CD4-positive, alpha-beta memory T cell (primary cell): ENCODE measurements at regions of chr19 and their contacts with region 1.

Region 1: GRCh38 chr19:38335949-38336637 is 463 bp downstream of the CATSPERG start:
- DNase-seq: peak; percentile 93 to 97 (median 94)
- H3K4me3 ChIP-seq: peak overlapping the region; percentile 79 to 88
- H3K4me3 Mint-ChIP-seq: peak overlapping the region; percentile 93 to 99 (median 96)
- H3K27ac ChIP-seq: peak overlapping the region; percentile 83
- H3K27ac Mint-ChIP-seq: peak overlapping the region; percentile 94 to 100 (median 99)
- H3K4me1 ChIP-seq: peaks cover 7% of the 10 kb centered on the region
- H3K4me1 Mint-ChIP-seq: peaks cover 11 to 20% (median 16%) of the 10 kb centered on the region in 4 donors
- H3K27me3 ChIP-seq: no peaks in the 10 kb centered on the region
- H3K27me3 Mint-ChIP-seq: no peaks in the 10 kb centered on the region

Region 2: DNA sequence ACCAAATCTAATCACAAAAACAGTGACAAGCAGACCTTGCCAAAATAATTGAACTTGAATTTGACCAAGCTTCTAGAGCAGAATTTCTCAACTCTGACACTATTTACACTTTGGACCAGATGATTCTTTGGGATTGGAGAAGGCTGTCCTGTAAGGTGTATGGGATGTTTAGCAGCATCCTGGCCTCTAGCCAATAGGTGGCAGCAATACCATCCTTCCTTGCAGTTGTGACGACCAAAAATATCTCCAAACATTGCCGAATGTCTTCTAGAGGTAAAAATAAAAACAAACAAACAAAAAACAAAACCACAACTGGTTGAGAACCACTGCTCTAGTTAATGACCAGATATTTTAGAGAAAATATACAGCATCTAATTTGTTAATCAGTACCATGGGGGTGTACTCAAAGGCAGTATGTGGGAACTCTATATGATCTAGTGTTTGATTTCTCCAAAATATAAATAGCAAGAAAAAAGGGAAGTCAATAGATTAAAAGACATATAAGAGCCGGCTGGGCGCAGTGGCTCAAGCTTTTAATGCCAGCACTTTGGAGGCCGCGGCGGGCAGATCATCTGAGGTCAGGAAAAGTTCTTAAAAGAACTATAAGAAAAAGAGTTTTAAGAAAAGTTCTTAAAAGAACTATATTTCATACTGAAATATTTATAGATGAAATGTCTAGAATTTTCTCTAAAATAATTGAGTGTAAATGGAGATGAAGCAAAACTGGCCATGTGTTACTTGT is 1026.1 kb before region 1 on chr19:
- CTCF ChIA-PET with region 1: no interaction called
- POLR2A ChIA-PET with region 1: no interaction called
- intact Hi-C with region 1: loop called (anchors 10 kb)
- DNase-seq: peak in 3 of 5 donors; percentile 31 to 39 (median 38)
- H3K4me3 ChIP-seq: no peak overlapping the region
- H3K4me3 Mint-ChIP-seq: no peak overlapping the region
- H3K27ac ChIP-seq: no peak overlapping the region
- H3K27ac Mint-ChIP-seq: peak overlapping the region in 1 of 7 donors; percentile 10
- H3K4me1 ChIP-seq: peaks cover 5% of the 10 kb centered on the region
- H3K4me1 Mint-ChIP-seq: peaks cover 9 to 19% (median 13%) of the 10 kb centered on the region in 4 donors
- H3K27me3 ChIP-seq: no peaks in the 10 kb centered on the region
- H3K27me3 Mint-ChIP-seq: peaks cover 1 to 5% of the 10 kb centered on the region in 2 donors

Region 3: DNA sequence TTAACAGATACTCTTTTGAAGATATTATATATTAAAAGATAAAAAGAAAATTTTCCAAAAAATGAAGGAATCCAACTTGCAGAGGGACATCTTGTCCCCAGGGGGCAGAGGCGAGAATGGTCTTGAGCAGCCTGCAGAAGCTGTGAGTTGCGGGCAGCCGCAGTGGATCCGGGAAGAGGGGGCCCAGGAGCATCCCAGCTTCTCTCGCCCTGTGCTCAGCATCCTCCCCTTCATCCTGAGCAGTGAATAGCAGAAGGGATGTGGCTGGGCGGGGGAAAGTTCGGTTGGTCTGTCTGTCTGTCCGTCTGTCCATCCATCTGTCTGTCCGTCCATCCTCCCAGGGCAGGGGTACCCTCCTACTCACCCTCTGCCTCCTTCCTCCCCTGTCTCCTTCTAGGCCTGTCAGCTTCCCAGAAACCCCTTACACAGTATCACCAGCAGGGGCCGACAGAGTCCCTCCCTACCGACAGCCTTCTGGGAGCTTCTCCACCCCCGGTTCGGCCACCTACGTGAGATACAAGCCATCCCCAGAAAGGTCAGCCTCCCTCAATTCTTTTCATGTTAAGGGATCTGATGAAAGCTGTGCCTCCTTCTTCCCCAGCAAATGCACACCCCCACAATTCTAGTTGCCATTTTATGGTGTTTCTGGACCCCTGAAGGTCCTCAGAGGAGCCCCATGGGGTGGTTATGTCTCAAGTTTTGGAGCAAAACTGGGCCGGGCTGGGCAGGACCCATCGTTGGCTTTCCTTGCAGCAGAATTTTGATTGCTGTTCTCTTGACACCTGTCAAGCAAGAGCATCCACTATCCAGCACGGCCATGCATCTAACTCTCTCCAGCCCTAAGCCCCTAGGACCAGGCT is 193.7 kb before region 1 on chr19:
- CTCF ChIA-PET with region 1: no interaction called
- POLR2A ChIA-PET with region 1: no interaction called
- intact Hi-C with region 1: loop called (anchors 5 kb)
- DNase-seq: peak in 2 of 5 donors; percentile 8 to 11
- H3K4me3 ChIP-seq: no peak overlapping the region
- H3K4me3 Mint-ChIP-seq: no peak overlapping the region
- H3K27ac ChIP-seq: no peak overlapping the region
- H3K27ac Mint-ChIP-seq: peak overlapping the region in 2 of 7 donors; percentile 57 to 58
- H3K4me1 ChIP-seq: no peaks in the 10 kb centered on the region
- H3K4me1 Mint-ChIP-seq: peaks cover 0 to 7% (median 3%) of the 10 kb centered on the region in 4 donors
- H3K27me3 ChIP-seq: no peaks in the 10 kb centered on the region
- H3K27me3 Mint-ChIP-seq: no peaks in the 10 kb centered on the region

Region 4: DNA sequence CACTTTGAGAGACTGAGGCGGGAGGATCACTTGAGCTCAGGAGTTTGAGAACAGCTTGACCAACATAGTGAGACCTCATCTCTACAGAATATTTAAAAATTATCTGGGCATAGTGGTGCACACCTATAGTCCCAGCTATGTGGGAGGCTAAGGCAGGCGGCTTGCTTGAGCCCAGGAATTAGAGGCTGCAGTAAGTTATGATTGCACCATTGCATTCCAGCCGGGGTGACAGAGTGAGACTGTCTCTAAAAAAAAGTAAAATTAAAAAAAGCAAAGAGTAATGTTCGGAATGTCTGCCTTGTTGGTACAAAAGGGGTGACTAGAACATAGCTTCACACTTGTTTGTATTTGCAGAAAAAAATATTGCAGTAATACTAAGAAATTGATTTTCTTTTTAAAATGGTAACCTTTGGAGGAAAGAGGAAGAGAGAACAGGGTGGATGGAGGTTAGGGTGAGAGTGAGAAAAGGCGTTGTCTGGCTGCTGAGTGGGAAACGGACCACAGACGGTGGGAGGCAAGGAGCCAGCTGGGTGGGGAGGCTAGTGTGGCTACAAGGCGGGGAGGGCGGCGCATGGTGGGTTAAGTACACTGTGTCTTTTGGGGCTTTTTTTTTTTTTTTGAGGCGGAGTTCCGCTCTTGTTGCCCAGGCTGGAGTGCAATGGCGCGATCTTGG is 90.1 kb before region 1 on chr19:
- CTCF ChIA-PET with region 1: interaction called, 73 read pairs
- POLR2A ChIA-PET with region 1: interaction called, 6 read pairs
- intact Hi-C with region 1: loop called (anchors 1 kb)
- DNase-seq: no peak
- H3K4me3 ChIP-seq: no peak overlapping the region
- H3K4me3 Mint-ChIP-seq: no peak overlapping the region
- H3K27ac ChIP-seq: no peak overlapping the region
- H3K27ac Mint-ChIP-seq: no peak overlapping the region
- H3K4me1 ChIP-seq: no peaks in the 10 kb centered on the region
- H3K4me1 Mint-ChIP-seq: peaks cover 2 to 5% (median 3%) of the 10 kb centered on the region in 4 donors
- H3K27me3 ChIP-seq: no peaks in the 10 kb centered on the region
- H3K27me3 Mint-ChIP-seq: peaks cover 0 to 4% of the 10 kb centered on the region in 2 donors

Region 5: DNA sequence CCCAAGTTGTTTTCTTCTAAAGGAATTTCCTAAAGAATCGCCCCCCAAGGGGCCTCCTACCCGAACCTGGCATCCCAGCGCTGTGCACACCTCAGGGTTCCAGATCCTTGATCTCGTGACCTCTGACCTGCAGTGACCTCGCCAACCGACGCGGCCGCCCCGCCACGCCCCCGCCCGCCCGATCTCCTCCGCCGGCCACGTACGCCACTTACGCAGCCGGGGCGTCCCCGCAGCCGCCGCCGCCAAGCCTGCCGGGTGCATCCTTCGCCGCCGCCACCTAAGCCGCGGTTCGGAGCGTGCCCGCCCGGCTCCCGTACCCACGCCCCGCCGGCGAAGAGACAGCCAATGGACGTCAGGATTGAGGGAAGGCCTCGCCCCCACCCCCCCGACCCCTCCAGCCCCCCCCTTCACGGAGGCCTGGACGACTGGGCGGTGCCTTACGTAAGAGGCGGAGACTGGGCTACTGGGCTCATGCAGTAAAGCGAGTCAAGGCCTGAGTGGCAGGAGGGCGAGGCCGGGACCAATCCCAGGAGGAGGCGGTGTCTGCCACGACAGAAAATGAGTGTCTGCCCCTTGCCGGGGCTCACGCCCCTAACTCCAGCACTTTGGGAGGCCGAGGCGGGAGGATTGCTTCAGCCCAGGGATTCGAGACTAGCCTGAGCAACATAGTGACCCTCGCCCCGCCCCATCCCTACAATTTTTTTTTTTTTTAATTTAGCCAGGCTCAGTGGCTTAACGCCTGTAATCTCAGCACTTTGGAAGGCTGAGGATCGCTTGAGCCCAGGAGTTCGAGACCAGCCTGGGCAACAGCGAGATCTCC is 20.2 kb before region 1 on chr19 and contains the start of gene YIF1B:
- CTCF ChIA-PET with region 1: interaction called, 4 read pairs
- POLR2A ChIA-PET with region 1: no interaction called
- intact Hi-C with region 1: loop called (anchors 1 kb)
- DNase-seq: peak; percentile 96 to 98 (median 96)
- H3K4me3 ChIP-seq: peak within 1 kb of the TSS; percentile 83 to 97
- H3K4me3 Mint-ChIP-seq: peak within 1 kb of the TSS; percentile 80 to 98 (median 94)
- H3K27ac ChIP-seq: peak within 1 kb of the TSS; percentile 91
- H3K27ac Mint-ChIP-seq: peak within 1 kb of the TSS; percentile 89 to 99 (median 96)
- H3K4me1 ChIP-seq: peaks cover 40% of the 10 kb centered on the region
- H3K4me1 Mint-ChIP-seq: peaks cover 23 to 64% (median 44%) of the 10 kb centered on the region in 4 donors
- H3K27me3 ChIP-seq: no peaks in the 10 kb centered on the region
- H3K27me3 Mint-ChIP-seq: no peaks in the 10 kb centered on the region
- total RNA-seq, gene YIF1B: 35.8 to 38.4 TPM

Region 6: GRCh38 chr19:38387550-38388348 is 51.7 kb after region 1 on chr19 and contains the start of gene GGN:
- CTCF ChIA-PET with region 1: interaction called, 3 read pairs
- POLR2A ChIA-PET with region 1: interaction called, 3 read pairs
- intact Hi-C with region 1: loop called (anchors 1 kb)
- DNase-seq: peak; percentile 77 to 92 (median 80)
- H3K4me3 ChIP-seq: peak within 1 kb of the TSS; percentile 65 to 70
- H3K4me3 Mint-ChIP-seq: peak within 1 kb of the TSS; percentile 89 to 98 (median 94)
- H3K27ac ChIP-seq: peak within 1 kb of the TSS; percentile 21
- H3K27ac Mint-ChIP-seq: peak within 1 kb of the TSS; percentile 80 to 99 (median 95)
- H3K4me1 ChIP-seq: peaks cover 31% of the 10 kb centered on the region
- H3K4me1 Mint-ChIP-seq: peaks cover 12 to 44% (median 18%) of the 10 kb centered on the region in 4 donors
- H3K27me3 ChIP-seq: no peaks in the 10 kb centered on the region
- H3K27me3 Mint-ChIP-seq: peaks cover 0 to 11% of the 10 kb centered on the region in 2 donors
- total RNA-seq, gene GGN: 0.15 TPM in 1 of 2 experiments, not detected in the other